ENCODE measurements at regions of chr3 and their contacts with region 1.

Region 1: GRCh38 chr3:52471371-52472238 is 16.2 kb downstream of the NISCH start:
- DNase-seq: no peak
- H3K4me3 ChIP-seq: no peak overlapping the region
- CTCF ChIP-seq: peak; percentile 56

Region 2: GRCh38 chr3:52128118-52128683 is 343.4 kb before region 1 on chr3:
- CTCF ChIA-PET with region 1: no interaction called
- POLR2A ChIA-PET with region 1: no interaction called
- DNase-seq: no peak
- H3K4me3 ChIP-seq: no peak overlapping the region
- CTCF ChIP-seq: no peak

Region 3: DNA sequence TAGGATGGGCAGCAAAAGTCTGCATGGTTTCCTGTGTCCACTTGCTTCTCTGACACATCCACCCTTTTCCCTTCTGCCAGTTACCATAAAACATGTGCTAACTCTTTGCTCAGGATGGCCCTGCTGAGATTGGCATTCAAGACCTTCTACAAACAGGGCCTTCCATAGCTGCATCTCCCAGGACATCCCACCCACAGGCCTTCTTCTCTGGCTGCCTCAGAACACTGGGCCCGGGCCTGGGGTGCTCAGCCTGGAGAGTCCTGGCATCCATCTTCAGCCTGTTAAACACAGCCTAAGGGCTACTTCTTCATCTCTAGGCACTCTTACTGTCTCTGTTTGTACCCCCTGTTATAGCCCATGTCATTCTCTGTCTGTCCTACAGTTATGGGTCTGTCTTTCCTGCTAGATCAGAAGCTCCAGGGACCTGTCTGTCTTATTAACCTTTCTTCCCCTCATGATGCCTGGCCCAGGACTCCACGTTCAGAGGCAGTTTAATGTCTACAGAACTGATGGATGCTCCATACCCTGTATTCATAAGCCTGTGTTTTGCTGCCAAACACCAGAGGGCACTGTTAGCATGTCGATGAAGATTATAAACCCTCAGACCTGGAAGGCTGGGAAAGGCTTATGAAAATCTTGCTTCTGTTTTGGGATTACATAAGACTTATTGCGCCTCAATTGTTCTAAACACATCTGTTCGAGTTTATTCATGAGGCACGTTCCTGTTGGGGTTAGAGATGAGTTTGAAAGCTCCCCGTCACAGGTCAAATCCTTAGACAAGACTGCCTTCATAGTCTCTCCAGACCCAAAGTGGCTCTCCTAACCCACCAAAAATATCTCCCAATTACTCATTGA is 43.2 kb before region 1 on chr3:
- CTCF ChIA-PET with region 1: interaction called, 10 read pairs
- POLR2A ChIA-PET with region 1: no interaction called
- DNase-seq: peak; percentile 23
- H3K4me3 ChIP-seq: no peak overlapping the region
- CTCF ChIP-seq: peak; percentile 80

Region 4: DNA sequence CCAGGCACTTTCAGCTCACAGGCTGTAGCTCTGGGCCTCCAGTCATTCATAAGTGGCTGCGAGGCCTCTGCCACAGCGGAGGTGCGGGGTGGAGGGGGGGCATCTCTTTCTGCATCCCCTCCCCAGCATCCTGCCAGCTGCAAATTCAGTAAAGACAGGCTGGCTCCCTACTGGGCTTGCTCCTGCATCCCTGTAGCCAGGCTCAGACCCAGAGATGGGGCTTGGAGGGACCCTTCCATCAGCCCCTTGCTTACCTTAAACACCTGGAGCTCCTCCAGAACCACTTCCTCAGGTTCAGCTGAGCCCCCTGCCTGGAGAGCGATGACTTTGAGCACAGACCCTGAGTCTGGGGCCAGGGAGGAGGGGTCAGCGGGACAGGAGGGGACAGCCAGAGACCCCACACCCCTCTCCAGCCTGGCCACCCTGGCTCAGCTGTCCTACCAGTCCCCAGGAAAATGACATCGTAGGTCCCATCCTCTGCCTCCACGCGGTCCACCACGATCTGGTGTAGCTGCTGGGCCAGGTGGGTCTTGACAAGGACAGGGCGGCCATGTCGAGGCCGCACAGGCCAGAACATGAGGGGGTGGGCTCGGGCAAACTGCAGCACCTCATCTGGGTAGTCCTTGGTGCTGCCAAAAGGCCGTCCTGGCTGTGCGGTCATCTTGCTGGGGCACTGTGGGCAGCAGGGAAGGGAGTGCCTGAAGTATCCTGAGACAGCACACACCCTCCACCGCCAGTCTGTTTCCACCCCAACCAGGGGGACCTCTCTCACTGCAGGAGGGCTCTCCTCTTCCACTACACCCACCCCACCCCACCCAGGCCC is 32.0 kb before region 1 on chr3:
- CTCF ChIA-PET with region 1: no interaction called
- POLR2A ChIA-PET with region 1: no interaction called
- DNase-seq: no peak
- H3K4me3 ChIP-seq: no peak overlapping the region
- CTCF ChIP-seq: no peak

Region 5: GRCh38 chr3:52455283-52456168 is 16.1 kb before region 1 on chr3 and contains the start of gene NISCH:
- CTCF ChIA-PET with region 1: interaction called, 10 read pairs
- POLR2A ChIA-PET with region 1: no interaction called
- DNase-seq: no peak
- H3K4me3 ChIP-seq: peak within 1 kb of the TSS; percentile 84
- CTCF ChIP-seq: no peak

Region 6: DNA sequence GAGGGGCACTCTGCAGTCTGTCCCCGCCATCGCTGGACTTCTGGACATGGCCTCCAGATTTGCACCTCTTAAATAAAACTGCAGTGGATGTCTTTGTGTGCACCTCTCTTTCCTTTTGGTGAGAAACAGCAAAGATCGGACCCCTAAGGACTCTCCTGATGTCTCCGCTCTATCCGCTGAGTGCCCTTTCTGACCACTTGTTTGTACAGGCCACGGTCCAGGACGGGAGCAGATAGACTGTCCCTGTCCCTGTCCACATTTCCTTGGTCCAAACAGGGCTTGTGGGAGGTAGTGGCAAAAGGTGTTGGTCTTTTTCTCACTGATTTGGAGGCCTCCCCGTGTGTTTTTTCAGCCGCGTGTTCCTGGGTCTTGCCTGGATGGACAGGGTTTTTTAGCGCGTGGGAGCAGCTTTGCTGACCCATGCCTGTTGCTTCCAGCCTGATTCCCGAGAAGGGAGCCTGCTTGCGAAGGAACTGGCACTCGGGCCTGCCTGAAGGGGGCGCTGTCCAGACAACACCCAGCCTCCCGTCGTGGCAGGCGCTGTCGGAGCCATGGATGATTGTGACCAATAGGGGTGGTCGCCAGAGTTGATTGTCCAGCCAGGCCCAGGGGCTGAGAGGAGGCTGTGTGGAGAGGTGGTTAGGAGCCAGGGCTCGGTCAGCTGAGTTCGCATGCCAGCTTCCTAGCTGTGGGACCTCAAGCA is 10.4 kb after region 1 on chr3:
- CTCF ChIA-PET with region 1: interaction called, 19 read pairs
- POLR2A ChIA-PET with region 1: no interaction called
- DNase-seq: no peak
- H3K4me3 ChIP-seq: no peak overlapping the region
- CTCF ChIP-seq: peak; percentile 55

Region 7: DNA sequence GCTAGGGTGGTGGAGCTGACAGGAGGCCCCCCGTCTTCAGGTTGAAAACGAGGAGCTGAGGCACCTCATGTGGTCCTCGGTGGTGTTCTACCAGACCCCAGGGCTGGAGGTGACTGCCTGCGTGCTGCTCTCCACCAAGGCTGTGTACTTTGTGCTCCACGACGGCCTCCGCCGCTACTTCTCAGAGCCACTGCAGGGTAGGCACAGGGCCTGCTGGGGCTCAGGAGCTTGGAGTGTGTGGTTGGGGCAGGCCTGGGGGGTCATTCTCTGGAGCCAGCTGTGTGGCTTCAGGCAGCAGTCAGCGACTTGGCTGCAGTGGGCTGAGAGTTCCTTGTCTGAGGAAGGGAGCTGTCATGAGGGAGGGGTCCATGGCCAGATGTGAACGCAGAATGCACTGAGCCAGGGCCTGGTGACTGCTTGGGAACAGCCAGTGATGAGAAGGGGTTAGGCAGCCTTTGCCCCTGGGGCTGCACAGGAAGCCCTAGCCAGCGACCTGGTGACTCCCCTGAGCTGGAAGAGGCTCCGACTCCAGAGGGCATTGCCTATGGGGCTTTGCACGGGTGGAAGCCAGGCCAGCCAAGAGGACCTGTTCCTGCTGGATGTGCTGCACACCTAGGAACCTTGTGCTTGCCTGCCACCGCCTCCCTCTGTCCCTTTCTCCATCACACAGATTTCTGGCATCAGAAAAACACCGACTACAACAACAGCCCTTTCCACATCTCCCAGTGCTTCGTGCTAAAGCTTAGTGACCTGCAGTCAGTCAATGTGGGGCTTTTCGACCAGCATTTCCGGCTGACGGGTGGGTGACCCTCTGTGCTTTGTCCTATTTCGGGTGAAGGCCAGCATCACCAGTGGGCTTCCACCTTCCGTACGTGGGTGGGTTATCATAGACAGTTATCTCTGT is 18.7 kb after region 1 on chr3:
- CTCF ChIA-PET with region 1: interaction called, 12 read pairs
- POLR2A ChIA-PET with region 1: no interaction called
- DNase-seq: no peak
- H3K4me3 ChIP-seq: no peak overlapping the region
- CTCF ChIP-seq: no peak

Region 8: GRCh38 chr3:53195602-53196574 is 724.3 kb after region 1 on chr3:
- CTCF ChIA-PET with region 1: no interaction called
- POLR2A ChIA-PET with region 1: no interaction called
- DNase-seq: no peak
- H3K4me3 ChIP-seq: no peak overlapping the region
- CTCF ChIP-seq: peak; percentile 99